ENCODE measurements at regions of chr4 and their contacts with region 1.

Region 1: DNA sequence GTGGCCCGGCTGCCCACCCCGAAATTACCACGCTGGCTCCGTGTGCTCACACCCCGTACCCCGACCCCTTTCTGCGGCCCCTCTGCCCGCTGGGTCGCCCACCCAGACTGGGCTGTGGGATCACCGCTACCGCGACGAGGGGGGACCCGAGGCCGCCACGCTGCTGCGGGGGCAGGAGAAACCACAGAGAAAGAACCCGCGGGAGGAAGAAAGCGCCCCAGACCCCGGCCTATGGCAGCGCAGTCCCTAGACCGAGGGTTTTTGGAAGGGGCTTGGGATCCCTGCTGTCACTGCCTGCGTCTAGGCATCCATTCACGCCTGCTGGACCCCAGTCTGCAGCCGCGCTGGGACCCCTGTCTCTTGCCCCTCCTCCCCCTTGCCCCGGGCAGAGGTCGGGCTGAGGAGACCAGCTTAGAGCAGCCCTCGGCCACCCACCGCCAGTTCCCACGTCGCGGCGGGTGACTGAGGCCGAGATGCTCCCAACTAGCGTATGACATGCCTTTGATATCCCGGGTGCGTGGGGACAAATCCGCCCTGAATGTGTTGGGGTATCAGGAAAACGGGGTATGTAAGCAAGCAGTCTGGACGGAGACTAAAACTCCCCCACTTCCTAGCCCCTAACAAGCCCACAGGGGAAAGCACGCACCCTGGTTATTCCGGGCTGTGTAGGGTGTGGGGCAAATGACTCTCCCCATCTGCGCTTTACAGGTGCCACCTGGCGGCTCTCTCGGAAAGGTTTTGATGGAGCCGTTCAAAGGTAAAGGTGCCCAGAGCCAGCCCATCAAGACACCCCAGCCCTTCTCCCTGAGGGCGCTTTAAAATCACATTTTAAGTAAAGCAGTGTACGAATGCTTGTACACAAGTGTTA is 862 bp upstream of the INPP4B start:
- DNase-seq: peak; percentile 25 to 57
- ATAC-seq: peak; percentile 77 to 82
- H3K4me3 ChIP-seq: peak overlapping the region; percentile 68
- H3K27ac ChIP-seq: peak overlapping the region; percentile 72 to 88
- H3K4me1 ChIP-seq: peaks cover 14% of the 10 kb centered on the region; the same call in 2 of the 3 replicates
- CTCF ChIP-seq: peak; percentile 59
- EP300 ChIP-seq: no peak
- POLR2A ChIP-seq: no peak
- RAD21 ChIP-seq: peak; percentile 77 to 81

Region 2: DNA sequence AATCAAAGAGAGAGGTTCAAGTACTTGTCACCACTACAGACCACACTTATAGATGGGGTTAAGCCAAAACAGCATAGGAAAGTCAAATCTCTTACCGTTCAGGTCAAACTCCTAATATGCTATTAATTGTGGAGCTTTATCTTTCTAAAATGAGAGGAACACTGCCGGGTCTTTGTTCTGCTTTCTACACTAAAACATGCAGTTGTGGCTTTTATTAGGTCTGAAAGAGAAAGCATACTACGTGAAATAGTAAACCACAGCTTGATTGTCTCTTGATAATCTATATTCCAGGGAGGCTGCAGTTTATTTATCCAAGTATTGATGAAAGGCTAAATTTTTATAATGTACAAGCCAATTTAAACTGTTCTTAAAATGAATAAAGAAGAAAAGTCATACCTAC is 11.5 kb after region 1 on chr4:
- CTCF ChIA-PET with region 1: interaction called, 18 read pairs
- POLR2A ChIA-PET with region 1: no interaction called
- DNase-seq: no peak
- ATAC-seq: no peak
- H3K4me3 ChIP-seq: no peak overlapping the region
- H3K27ac ChIP-seq: no peak overlapping the region
- H3K4me1 ChIP-seq: no peaks in the 10 kb centered on the region
- CTCF ChIP-seq: no peak
- EP300 ChIP-seq: no peak
- POLR2A ChIP-seq: no peak
- RAD21 ChIP-seq: no peak

Region 3: DNA sequence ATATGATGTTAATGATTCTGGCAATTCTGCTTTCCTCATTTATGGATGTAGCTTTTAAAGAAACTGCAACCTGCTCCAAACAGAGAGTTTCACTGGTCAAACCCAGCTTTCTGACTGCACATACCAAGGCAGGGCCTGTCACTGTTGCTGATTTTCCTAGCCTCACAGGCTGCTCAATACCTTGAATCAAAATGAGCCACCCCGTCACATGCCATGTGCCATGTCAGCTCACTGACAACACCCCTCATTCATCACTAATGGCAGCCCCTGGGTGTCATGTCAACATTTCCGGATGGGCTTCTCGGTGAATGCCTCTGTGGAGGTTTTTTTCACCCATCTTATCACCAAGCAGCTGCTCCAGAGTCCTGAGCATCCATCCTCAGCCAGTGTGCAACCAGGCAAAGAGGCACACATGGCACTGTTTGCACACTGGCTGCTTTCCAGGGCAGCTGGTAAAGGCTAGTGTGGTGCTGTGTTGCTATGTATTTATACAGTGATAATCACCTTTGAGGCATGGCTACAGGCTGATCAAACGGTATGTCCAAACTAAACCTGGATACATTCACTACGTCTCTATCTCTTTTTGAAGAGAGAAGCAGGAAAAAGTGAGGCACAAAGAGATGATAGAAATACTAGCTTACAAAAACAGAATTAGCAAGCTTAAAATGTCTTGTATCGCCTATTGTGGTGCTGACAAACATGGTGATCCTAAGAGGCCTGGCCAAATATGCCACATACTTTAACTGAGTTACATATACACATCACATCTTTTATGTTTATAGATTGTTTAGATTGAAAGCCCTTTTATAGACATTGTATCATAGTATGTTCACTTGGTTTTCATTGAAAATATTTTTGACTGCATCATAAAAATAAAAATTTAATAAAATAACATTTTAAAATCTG is 93.7 kb after region 1 on chr4:
- CTCF ChIA-PET with region 1: no interaction called
- POLR2A ChIA-PET with region 1: no interaction called
- DNase-seq: no peak
- ATAC-seq: no peak
- H3K4me3 ChIP-seq: no peak overlapping the region
- H3K27ac ChIP-seq: no peak overlapping the region
- H3K4me1 ChIP-seq: no peaks in the 10 kb centered on the region
- CTCF ChIP-seq: no peak
- EP300 ChIP-seq: no peak
- POLR2A ChIP-seq: no peak
- RAD21 ChIP-seq: no peak